Activated naive CD8-positive, alpha-beta T cell treated with anti-CD3 and anti-CD28 coated beads, Interleukin-2, amount 10 ng/mL, durations not matched to agents 7 days and 5 days (primary cell): ENCODE measurements at regions of chr1 and their contacts with region 1.

Region 1: DNA sequence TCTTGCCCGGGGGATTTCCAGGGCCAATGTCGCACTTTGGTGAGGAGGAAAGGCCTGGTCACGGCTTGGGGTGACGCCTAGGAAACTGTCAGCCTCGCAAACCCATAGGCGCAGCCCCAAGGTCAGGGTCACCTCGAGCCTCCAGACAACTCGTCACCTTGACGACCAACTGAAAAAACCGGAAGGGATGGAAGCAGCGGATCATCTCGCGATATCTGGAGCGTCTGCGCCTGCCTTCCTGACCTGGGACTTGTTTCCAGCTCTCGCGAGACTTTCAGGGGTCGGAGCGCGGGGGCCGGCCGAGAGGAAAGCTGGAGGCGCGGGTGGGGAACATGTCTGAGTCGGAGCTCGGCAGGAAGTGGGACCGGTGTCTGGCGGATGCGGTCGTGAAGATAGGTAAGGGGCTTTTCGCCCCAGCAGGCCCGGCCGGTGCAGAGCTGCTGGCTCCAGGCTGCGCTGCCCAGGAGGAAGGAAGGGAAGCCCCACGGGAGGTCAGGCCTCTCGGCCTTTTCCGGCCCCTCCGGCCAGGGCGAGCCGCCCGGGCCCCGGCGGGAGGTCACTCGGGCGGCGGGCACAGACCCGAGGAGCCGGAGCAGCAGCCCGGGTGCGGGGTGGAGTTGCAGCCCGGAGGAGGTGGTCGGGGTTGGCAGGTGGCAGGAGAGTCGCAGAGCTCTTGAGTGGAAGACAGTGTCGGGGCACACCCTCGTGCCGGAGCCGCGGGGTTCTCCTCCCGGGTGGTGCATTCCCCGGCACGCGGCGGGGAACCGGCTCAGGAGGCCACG is 47.2 kb upstream of the NBL1 start:
- DNase-seq: peak; percentile 93
- ATAC-seq: peak; percentile 84
- H3K4me3 Mint-ChIP-seq: peak overlapping the region; percentile 99
- H3K27ac Mint-ChIP-seq: peak overlapping the region; percentile 100
- H3K4me1 Mint-ChIP-seq: peaks cover 39% of the 10 kb centered on the region
- H3K27me3 Mint-ChIP-seq: no peaks in the 10 kb centered on the region

Region 2: DNA sequence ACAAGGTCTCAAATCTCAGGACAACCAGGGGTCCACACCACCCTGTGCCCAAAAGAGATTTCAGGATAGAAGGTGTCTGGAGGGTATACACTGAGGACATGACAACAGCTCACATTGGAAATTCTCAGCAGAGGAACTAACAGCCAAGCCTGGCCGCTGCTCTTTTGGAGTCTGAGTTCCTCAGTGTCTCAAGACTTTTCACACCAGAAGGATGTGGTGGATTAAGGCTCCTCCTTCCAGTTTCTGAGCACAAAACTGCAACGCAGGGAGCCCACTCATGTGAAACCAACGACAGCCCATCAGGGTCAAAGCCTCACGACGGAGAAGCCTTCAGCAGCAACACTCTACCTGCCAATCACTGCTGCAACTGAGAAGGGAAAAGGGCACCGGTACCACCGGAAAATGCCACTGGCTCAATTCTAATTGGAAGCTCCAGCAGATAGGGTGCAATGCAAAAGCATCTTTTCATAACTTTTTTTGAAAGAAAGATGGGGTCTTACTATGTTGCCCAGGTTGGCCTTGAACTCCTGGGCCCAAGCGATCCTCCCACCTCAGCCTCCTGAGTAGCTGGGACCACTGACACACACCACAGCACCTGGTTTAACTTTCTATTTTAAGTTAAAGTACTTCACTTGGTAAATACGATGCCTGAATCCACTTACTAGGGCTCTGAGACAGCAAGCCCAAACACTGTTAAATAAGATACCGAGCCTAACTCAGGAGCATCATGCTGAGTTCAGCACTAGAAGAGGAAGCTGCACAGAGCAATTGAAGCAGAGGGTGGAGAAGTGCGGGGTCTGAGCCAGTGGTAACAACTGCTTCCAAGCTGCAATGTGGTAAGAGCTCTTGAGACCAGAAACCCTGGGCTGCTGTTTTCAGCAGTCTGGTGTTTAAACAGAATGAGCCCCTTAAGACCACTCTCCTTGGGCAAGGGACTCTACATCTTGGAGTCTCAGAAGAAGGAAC is 119.3 kb before region 1 on chr1:
- POLR2A ChIA-PET with region 1: interaction called, 27 read pairs
- DNase-seq: peak; percentile 62
- ATAC-seq: peak; percentile 82
- H3K4me3 Mint-ChIP-seq: peak overlapping the region; percentile 84
- H3K27ac Mint-ChIP-seq: peak overlapping the region; percentile 98
- H3K4me1 Mint-ChIP-seq: peaks cover 85% of the 10 kb centered on the region
- H3K27me3 Mint-ChIP-seq: no peaks in the 10 kb centered on the region

Region 3: GRCh38 chr1:19577036-19577435 is 19.9 kb before region 1 on chr1:
- POLR2A ChIA-PET with region 1: no interaction called
- DNase-seq: no peak
- ATAC-seq: no peak
- H3K4me3 Mint-ChIP-seq: no peak overlapping the region
- H3K27ac Mint-ChIP-seq: no peak overlapping the region
- H3K4me1 Mint-ChIP-seq: peaks cover 2% of the 10 kb centered on the region
- H3K27me3 Mint-ChIP-seq: peaks cover 8% of the 10 kb centered on the region

Region 4: GRCh38 chr1:19606817-19607642 is 10.1 kb after region 1 on chr1:
- POLR2A ChIA-PET with region 1: interaction called, 13 read pairs
- DNase-seq: no peak
- ATAC-seq: peak; percentile 62
- H3K4me3 Mint-ChIP-seq: peak overlapping the region; percentile 35
- H3K27ac Mint-ChIP-seq: peak overlapping the region; percentile 76
- H3K4me1 Mint-ChIP-seq: peaks cover 36% of the 10 kb centered on the region
- H3K27me3 Mint-ChIP-seq: no peaks in the 10 kb centered on the region

Region 5: GRCh38 chr1:19643602-19644394 is 46.9 kb after region 1 on chr1 and contains the start of gene NBL1:
- POLR2A ChIA-PET with region 1: interaction called, 40 read pairs
- DNase-seq: peak; percentile 85
- ATAC-seq: peak; percentile 88
- H3K4me3 Mint-ChIP-seq: peak within 1 kb of the TSS; percentile 100
- H3K27ac Mint-ChIP-seq: peak within 1 kb of the TSS; percentile 98
- H3K4me1 Mint-ChIP-seq: peaks cover 29% of the 10 kb centered on the region
- H3K27me3 Mint-ChIP-seq: peaks cover 15% of the 10 kb centered on the region
- total RNA-seq, gene NBL1: 35.3 to 36.0 TPM